Calu3 (cell line): ENCODE measurements at regions of chr4 and their contacts with region 1.

Region 1: GRCh38 chr4:170400361-170400760 is 310.6 kb upstream of the AADAT start:
- DNase-seq: no peak
- H3K4me3 Mint-ChIP-seq: no peak overlapping the region
- H3K27ac Mint-ChIP-seq: no peak overlapping the region
- H3K4me1 Mint-ChIP-seq: no peaks in the 10 kb centered on the region
- H3K27me3 Mint-ChIP-seq: no peaks in the 10 kb centered on the region
- CTCF ChIP-seq: no peak

Region 2: GRCh38 chr4:170497112-170497511 is 96.8 kb after region 1 on chr4:
- CTCF ChIA-PET with region 1: no interaction called
- intact Hi-C with region 1: loop called (anchors 5 kb)
- DNase-seq: peak; percentile 38
- H3K4me3 Mint-ChIP-seq: peak overlapping the region; percentile 76
- H3K27ac Mint-ChIP-seq: peak overlapping the region; percentile 67
- H3K4me1 Mint-ChIP-seq: no peaks in the 10 kb centered on the region
- H3K27me3 Mint-ChIP-seq: no peaks in the 10 kb centered on the region
- CTCF ChIP-seq: no peak